ENCODE measurements at regions of chr1 and their contacts with region 1.

Region 1: GRCh38 chr1:90568436-90568835 is 148.7 kb downstream of the BARHL2 start:
- DNase-seq: no peak
- ATAC-seq: no peak
- H3K4me3 ChIP-seq: no peak overlapping the region
- H3K27ac ChIP-seq: no peak overlapping the region
- H3K4me1 ChIP-seq: no peaks in the 10 kb centered on the region
- H3K27me3 ChIP-seq: peaks cover 29% of the 10 kb centered on the region
- CTCF ChIP-seq: no peak
- POLR2A ChIP-seq: no peak
- RAD21 ChIP-seq: no peak

Region 2: DNA sequence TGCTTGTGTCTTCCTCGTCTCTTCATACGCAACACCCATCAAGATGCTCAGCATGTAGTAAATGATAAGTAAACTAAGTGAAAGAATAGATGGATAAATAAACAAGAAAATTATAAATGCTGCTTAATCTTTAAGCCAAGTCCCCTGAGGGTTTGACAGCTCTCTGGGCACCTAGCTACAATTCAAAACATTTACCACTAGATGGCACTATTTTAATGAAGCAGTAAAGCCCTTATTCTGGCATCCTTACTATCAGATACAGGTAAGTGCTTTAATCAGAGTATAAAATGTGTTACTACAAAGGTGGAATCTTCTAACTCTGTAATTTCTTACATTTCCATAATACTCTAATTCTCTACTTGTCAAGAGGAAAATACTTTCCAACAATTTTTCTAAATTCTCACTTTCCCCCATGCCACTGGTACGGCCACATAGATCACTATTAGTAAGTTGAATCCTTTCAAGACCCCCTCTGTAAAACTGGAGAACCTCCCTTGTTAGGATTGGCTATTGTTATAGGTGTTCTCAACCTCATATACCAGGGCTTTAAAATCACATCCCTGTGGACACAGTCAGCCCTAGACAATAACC is 10.9 kb after region 1 on chr1:
- CTCF ChIA-PET with region 1: interaction called, 14 read pairs
- POLR2A ChIA-PET with region 1: no interaction called
- RAD21 ChIA-PET with region 1: no interaction called
- intact Hi-C with region 1: no loop called
- DNase-seq: peak; percentile 43
- ATAC-seq: peak; percentile 86
- H3K4me3 ChIP-seq: no peak overlapping the region
- H3K27ac ChIP-seq: no peak overlapping the region
- H3K4me1 ChIP-seq: no peaks in the 10 kb centered on the region
- H3K27me3 ChIP-seq: peaks cover 26% of the 10 kb centered on the region
- CTCF ChIP-seq: peak; percentile 42 to 71 (median 46); a peak in 5 of 6 replicates
- POLR2A ChIP-seq: no peak
- RAD21 ChIP-seq: peak; percentile 58